ENCODE measurements at regions of chr2 and their contacts with region 1.

Region 1: GRCh38 chr2:118855451-118856279 is 8.2 kb upstream of the EN1 start:
- DNase-seq: peak; percentile 75 to 81
- H3K4me3 ChIP-seq: no peak overlapping the region
- H3K27ac ChIP-seq: no peak overlapping the region
- H3K4me1 ChIP-seq: peaks cover 6 to 23% of the 10 kb centered on the region in 2 donors
- H3K27me3 ChIP-seq: peaks cover 83% of the 10 kb centered on the region
- CTCF ChIP-seq: peak; percentile 85 to 99 (median 96)
- POLR2A ChIP-seq: no peak

Region 2: GRCh38 chr2:118046634-118047210 is 808.9 kb before region 1 on chr2:
- intact Hi-C with region 1: loop called (anchors 10 kb)
- DNase-seq: no peak
- H3K4me3 ChIP-seq: no peak overlapping the region
- H3K27ac ChIP-seq: no peak overlapping the region
- H3K4me1 ChIP-seq: no peaks in the 10 kb centered on the region
- H3K27me3 ChIP-seq: no peaks in the 10 kb centered on the region
- CTCF ChIP-seq: peak in 5 of 6 experiments; percentile 16 to 60 (median 50)
- POLR2A ChIP-seq: no peak

Region 3: DNA sequence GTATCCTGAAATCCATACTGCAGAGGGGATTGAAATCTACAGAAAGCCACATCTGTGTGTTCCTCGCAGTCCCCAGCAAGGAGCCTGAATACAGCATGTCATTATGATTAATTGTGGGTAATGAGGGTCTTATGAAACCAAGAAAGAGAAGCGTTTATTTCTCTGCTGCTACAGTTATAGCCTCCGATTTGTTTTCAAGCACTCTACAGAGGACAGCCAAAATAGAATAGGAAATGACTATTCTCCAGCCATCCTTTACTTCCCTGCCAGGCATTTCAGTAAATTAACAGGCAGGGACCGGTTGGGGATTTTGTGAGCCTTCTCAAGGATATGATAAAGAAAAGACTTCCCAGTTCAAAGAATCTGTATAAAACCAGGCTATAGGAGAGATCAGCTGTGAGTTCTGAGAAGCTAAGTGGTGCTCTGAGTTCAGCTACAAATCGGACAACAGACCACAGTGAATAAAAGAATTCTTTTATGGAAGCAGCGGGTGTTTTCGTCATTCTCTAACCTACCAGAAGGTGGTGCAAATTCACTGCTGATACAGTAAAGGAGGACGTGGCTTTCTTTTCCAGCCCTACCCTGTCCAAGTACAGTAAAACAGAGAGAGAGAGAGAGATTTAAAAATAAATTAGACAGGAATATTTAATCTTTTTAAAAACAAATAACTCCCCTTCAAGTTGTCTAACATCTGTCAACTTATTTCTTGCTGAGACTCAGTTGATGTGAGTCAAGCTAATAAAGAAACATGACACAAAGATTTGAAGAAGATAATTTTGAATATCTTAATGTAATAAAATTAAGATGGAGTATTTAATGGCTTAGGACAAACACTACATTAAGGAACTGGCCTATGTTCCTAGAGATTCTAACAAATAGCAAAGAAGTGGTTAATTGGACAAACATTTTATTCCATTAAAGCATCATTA is 633.7 kb before region 1 on chr2:
- intact Hi-C with region 1: loop called (anchors 5 kb)
- DNase-seq: peak; percentile 18 to 31
- H3K4me3 ChIP-seq: no peak overlapping the region
- H3K27ac ChIP-seq: no peak overlapping the region
- H3K4me1 ChIP-seq: peaks cover 0 to 14% of the 10 kb centered on the region in 2 donors
- H3K27me3 ChIP-seq: peaks cover 39% of the 10 kb centered on the region
- CTCF ChIP-seq: peak in 5 of 6 experiments; percentile 36 to 72 (median 58)
- POLR2A ChIP-seq: no peak

Region 4: GRCh38 chr2:118371515-118371914 is 484.1 kb before region 1 on chr2:
- intact Hi-C with region 1: loop called (anchors 10 kb)
- DNase-seq: peak; percentile 26 to 32
- H3K4me3 ChIP-seq: no peak overlapping the region
- H3K27ac ChIP-seq: no peak overlapping the region
- H3K4me1 ChIP-seq: no peaks in the 10 kb centered on the region
- H3K27me3 ChIP-seq: no peaks in the 10 kb centered on the region
- CTCF ChIP-seq: peak in 4 of 6 experiments; percentile 22 to 45 (median 44)
- POLR2A ChIP-seq: no peak

Region 5: DNA sequence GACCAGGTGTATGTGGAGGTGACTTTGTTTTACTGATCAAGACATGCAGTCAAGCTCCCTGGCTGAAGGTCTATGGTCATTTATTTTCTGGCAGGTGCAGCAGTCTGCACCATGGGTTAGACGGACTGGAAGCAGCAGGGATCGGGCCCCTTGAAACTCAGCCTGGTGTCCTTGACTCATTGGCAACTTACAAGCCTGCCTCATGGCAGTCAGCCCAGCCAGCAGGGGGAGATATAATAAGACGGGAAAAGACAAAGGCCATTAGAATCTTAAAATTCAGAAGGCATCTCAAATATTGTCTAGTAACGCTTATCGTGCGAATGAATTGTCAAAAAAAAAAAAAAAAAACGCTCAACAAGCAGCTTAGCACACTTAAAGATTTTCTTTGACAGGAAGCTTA is 316.4 kb before region 1 on chr2:
- intact Hi-C with region 1: loop called (anchors 5 kb)
- DNase-seq: peak; percentile 48 to 63
- H3K4me3 ChIP-seq: no peak overlapping the region
- H3K27ac ChIP-seq: no peak overlapping the region
- H3K4me1 ChIP-seq: no peaks in the 10 kb centered on the region
- H3K27me3 ChIP-seq: no peaks in the 10 kb centered on the region
- CTCF ChIP-seq: peak in 5 of 6 experiments; percentile 13 to 43 (median 27)
- POLR2A ChIP-seq: no peak

Region 6: GRCh38 chr2:118986738-118987137 is 131.1 kb after region 1 on chr2:
- intact Hi-C with region 1: no loop called
- DNase-seq: no peak
- H3K4me3 ChIP-seq: no peak overlapping the region
- H3K27ac ChIP-seq: no peak overlapping the region
- H3K4me1 ChIP-seq: no peaks in the 10 kb centered on the region
- H3K27me3 ChIP-seq: no peaks in the 10 kb centered on the region
- CTCF ChIP-seq: no peak
- POLR2A ChIP-seq: no peak